Activated CD4-positive, alpha-beta T cell treated with anti-CD3 and anti-CD28 coated beads, Interleukin-2, amount 10 ng/mL, durations not matched to agents 24 days and 14 days (primary cell): ENCODE measurements at regions of chr16 and their contacts with region 1.

Region 1: DNA sequence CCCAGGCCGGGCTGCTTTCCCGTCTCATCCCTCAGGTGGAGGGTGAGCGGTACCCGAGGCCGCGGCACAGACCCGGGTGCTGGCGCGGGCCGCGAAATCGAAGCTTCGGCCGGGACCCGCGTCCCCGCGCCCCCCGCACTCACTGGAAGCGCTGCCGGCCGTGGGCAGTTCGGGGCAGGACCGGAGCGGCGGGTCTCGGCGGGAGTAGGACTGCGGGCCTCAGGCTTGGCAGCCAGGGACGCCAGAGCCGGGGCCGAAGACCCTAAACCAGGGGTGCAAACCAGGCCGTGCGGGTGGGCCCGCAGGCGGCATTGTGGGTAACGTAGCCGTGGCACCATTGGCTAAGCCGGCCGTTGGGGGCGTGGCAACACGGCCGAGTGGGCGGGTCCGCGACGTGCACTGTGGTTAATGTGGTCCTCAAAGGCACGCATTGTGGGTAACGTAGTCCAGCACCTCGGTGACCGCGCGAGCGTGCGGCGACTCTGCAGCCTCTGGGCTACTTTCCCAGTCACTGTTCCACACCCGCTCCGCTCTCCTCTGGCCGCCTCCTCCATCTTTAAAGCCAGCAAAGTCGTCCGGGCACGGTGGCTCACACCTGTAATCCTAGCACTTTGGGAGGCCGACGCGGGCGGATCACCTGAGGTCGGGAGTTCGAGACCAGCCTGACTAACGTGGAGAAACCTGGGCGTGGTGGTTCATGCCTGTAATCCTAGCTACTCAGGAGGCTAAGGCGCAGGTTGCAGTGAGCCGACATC is at the start of gene ZNF500:
- DNase-seq: peak; percentile 100
- H3K4me3 Mint-ChIP-seq: peak within 1 kb of the TSS; percentile 96
- H3K27ac Mint-ChIP-seq: peak within 1 kb of the TSS; percentile 91
- H3K4me1 Mint-ChIP-seq: peaks cover 26% of the 10 kb centered on the region
- H3K27me3 Mint-ChIP-seq: no peaks in the 10 kb centered on the region
- total RNA-seq, gene ZNF500: 15.0 and 16.1 TPM in 2 replicates

Region 2: GRCh38 chr16:4077083-4077714 is 689.9 kb before region 1 on chr16:
- intact Hi-C with region 1: no loop called
- DNase-seq: no peak
- H3K4me3 Mint-ChIP-seq: peak overlapping the region; percentile 40
- H3K27ac Mint-ChIP-seq: peak overlapping the region; percentile 70
- H3K4me1 Mint-ChIP-seq: peaks cover 39% of the 10 kb centered on the region
- H3K27me3 Mint-ChIP-seq: no peaks in the 10 kb centered on the region

Region 3: GRCh38 chr16:4660454-4661007 is 106.5 kb before region 1 on chr16:
- intact Hi-C with region 1: loop called (anchors 10 kb)
- DNase-seq: peak; percentile 92
- H3K4me3 Mint-ChIP-seq: peak overlapping the region; percentile 61
- H3K27ac Mint-ChIP-seq: peak overlapping the region; percentile 92
- H3K4me1 Mint-ChIP-seq: peaks cover 42% of the 10 kb centered on the region
- H3K27me3 Mint-ChIP-seq: no peaks in the 10 kb centered on the region

Region 4: GRCh38 chr16:4734063-4734729 is 32.9 kb before region 1 on chr16 and contains the starts of genes ANKS3 and DNAAF8:
- intact Hi-C with region 1: loop called (anchors 1 kb)
- DNase-seq: peak; percentile 96
- H3K4me3 Mint-ChIP-seq: peak within 1 kb of the TSS; percentile 93
- H3K27ac Mint-ChIP-seq: peak within 1 kb of the TSS; percentile 91
- H3K4me1 Mint-ChIP-seq: peaks cover 13% of the 10 kb centered on the region
- H3K27me3 Mint-ChIP-seq: no peaks in the 10 kb centered on the region
- total RNA-seq, gene ANKS3: 21.8 and 22.3 TPM in 2 replicates
- total RNA-seq, gene DNAAF8: not detected in 2 replicates

Region 5: DNA sequence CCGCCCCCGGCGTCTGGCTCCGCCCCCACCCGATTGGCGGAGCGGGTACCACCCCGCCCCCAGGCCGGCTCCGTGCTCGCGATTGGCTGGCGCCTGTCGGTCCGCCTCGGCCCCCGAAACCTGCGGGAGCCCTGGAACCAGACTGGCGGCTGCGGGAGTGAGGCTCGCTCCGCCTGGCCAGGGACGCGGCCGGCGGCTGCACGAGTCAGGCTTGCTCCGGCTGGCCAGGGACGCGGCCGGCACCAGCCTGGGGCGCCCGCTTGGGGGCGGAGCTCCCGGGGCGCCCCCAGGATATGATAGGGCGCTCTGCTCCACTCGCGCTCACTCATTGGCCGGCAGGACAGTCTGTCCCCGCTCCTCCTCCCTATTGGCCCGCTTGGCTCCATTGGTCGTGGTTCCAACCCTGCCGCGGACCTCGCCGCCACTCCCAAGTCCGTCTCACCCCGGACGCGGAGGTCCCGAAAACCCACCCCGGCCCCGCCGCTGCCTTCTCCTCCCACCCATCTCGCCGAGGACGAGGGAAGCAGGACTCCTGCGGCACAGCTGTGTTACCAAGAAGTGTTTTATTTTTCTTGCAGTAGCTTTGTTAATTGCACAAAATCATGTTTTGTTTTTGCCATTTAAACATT is 35.7 kb after region 1 on chr16:
- intact Hi-C with region 1: loop called (anchors 1 kb)
- DNase-seq: peak; percentile 98
- H3K4me3 Mint-ChIP-seq: peak overlapping the region; percentile 83
- H3K27ac Mint-ChIP-seq: no peak overlapping the region
- H3K4me1 Mint-ChIP-seq: peaks cover 7% of the 10 kb centered on the region
- H3K27me3 Mint-ChIP-seq: no peaks in the 10 kb centered on the region